Cardiac septum (tissue), 1 donor: ENCODE measurements at regions of chr7 and their contacts with region 1.

Region 1: GRCh38 chr7:30184791-30185487 is 50.2 kb downstream of the MTURN start:
- DNase-seq: no peak

Region 2: GRCh38 chr7:30148951-30149471 is 35.9 kb before region 1 on chr7:
- intact Hi-C with region 1: no loop called
- DNase-seq: peak; percentile 83

Region 3: DNA sequence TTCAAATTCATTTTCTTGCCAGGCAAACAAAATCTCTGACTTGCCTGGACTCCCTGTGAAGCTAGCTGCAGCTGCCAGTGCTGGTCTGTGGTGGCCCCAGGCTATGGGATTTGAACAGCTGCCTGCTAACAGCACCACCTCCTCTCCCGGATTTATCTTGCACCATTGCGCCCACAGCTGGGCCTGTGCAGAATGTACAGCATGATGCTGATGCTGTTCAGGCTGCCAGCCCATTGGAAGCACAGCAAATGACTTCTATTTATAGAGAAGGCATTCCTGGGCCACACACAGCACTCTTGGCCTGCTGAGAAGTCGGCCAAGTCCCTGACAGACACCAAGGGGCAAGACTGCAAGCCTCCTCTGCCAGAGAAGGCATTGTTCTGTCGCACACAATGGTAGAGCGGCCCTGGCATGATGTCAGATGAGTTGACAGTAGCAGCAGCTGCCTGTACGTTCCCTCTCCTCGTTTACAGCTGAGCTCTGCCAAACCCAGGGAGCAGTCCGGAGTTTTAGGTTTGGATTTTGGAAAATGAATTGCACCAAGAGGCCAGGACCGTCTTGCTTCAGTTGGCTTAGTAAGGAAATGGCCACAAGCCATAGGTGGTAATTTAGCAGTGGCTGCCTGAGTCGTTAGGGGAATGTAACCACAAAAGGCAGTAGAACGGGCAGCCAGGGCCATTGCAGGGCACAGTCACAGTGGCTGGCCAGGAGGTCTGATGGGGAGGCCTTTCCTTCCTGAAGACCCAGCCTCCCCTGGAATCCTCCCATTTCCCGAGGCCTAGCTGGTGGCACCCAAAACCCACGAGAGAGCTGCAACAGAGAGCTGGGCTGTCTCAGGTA is 11.7 kb before region 1 on chr7:
- intact Hi-C with region 1: loop called (anchors 1 kb)
- DNase-seq: peak; percentile 84

Region 4: GRCh38 chr7:30225863-30226613 is 41.1 kb after region 1 on chr7:
- intact Hi-C with region 1: loop called (anchors 5 kb)
- DNase-seq: no peak